ENCODE measurements at regions of chr14 and their contacts with region 1.

Region 1: DNA sequence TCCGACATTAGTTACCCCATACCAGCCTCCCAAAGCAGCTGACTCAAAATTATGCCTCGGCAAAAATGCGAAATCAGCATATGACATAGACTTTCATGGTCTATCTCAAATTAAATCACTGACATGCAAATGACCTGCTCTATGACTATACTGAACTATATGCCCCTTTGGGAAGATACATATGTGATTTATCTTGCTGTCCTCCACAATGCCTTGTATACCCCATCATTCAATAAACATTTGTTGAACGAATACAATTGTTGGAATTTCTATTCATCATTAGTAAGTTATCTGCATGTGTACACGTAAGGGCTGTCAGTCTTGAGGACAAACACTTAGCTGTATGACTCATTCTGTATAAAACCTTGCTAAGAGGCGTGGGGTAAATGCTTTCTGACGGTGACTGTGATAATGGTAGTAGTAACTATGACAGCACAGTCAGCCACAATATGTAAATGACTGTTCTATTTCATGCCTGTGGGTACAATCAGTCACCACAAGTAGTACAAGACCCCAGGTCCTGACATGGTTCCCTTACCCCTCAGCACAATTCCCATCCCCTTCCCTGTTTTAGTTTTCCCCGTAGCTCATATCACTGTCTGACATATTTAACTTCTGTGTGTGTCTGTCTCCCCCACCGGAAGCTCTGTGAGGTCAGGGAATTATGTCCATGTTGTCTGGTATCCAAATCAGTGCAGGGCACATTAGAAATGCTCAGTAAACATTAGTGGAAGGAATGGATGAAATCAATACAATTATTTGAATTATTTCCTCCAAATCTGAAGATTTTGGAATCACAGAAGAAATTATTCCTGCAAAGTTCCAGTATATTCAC is 42.8 kb downstream of the STXBP6 start:
- DNase-seq: no peak
- H3K4me3 Mint-ChIP-seq: no peak overlapping the region
- H3K27ac Mint-ChIP-seq: no peak overlapping the region
- H3K4me1 Mint-ChIP-seq: peaks cover 18% of the 10 kb centered on the region
- H3K27me3 Mint-ChIP-seq: no peaks in the 10 kb centered on the region
- CTCF ChIP-seq: no peak

Region 2: GRCh38 chr14:24911324-24912109 is 95.7 kb before region 1 on chr14:
- CTCF ChIA-PET with region 1: no interaction called
- POLR2A ChIA-PET with region 1: no interaction called
- intact Hi-C with region 1: loop called (anchors 5 kb)
- DNase-seq: no peak
- H3K4me3 Mint-ChIP-seq: peak overlapping the region; percentile 3
- H3K27ac Mint-ChIP-seq: no peak overlapping the region
- H3K4me1 Mint-ChIP-seq: peaks cover 11% of the 10 kb centered on the region
- H3K27me3 Mint-ChIP-seq: no peaks in the 10 kb centered on the region
- CTCF ChIP-seq: no peak